Left cardiac atrium (tissue), 4 donors: ENCODE measurements at regions of chr17 and their contacts with region 1.

Region 1: DNA sequence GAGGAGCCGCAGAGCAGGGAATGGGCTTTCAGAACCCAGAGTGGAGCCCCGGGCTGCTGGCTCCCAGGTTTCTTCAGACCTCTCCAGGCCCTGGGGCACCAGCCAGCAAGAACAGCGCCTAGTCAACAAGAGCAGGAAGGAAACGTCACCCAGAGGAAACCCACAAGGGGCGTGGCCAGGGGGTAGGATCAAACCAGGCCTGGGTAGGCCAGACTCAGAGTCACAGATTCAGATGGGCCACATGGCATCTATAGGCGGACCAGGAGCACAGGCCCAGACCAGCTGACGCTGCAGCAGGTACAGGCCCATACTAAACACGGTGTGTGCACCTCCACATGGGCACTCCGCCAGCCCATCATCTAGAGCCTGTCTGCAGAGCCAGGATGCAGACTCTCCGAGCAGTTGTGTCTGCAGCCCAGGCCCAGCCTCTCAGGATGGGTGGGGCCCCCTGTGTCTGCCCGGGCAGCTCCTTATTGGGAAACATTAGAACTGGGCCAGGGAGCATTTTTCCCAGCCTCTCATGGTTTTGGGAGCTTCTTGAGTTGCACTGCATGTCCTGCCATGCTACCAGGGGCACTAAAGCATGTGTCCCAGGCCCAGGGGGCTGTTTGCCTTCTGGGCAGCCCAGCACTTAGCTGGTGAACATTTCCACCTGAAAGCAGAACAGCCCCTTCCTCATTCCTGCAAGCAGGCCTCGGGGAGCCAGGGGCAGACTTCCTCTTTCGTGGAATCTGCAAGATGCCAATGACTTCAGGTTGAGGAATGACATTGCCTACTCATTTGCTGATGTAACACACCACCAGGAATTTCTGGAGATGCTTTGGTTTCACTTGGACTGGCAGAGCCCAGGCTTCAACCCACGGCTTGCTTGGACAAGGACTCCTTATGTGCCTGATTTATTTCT is at the start of gene NLRP1:
- DNase-seq: peak; percentile 94
- ATAC-seq: peak; percentile 95 to 96
- total RNA-seq, gene NLRP1: 10.4 to 10.5 TPM

Region 2: GRCh38 chr17:6421700-6422604 is 837.3 kb after region 1 on chr17:
- intact Hi-C with region 1: loop called (anchors 1 to 2 kb)
- DNase-seq: peak; percentile 81
- ATAC-seq: peak; percentile 84 to 85

Region 3: DNA sequence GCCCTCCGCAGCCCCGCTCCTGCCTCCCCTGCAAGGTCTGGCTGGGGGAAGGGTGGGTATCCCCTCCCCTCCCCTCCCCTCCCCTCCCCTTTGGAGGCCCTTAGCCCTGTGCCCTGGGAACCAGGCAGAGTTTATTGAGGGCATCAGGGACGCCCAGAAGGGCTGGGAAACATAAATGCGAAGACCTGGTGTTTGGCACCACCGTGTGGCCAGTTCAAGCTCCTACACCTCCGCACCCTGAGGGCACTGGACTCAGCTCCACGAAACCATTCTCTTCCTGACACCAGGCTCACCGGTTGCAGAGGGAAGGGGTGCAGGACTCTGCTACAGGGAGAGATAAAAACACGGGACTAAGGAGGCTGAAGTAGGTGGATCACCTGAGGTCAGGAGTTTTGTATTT is 851.3 kb after region 1 on chr17:
- intact Hi-C with region 1: loop called in 1 of 2 experiments (anchors 5 kb)
- DNase-seq: peak; percentile 63
- ATAC-seq: peak; percentile 82 to 89